Activated T-helper 1 cell treated with anti-CD3 and anti-CD28 coated beads, Interleukin-12 subunit alpha, Interleukin-12 subunit beta, Interleukin-2, Interleukin-4 antibody, amounts not matched to agents 30 ng/mL and 10 ng/mL and 1 ng/mL, durations not matched to agents 14 hours and 24 hours and 36 hours (primary cell): ENCODE measurements at regions of chr3 and their contacts with region 1.

Region 1: DNA sequence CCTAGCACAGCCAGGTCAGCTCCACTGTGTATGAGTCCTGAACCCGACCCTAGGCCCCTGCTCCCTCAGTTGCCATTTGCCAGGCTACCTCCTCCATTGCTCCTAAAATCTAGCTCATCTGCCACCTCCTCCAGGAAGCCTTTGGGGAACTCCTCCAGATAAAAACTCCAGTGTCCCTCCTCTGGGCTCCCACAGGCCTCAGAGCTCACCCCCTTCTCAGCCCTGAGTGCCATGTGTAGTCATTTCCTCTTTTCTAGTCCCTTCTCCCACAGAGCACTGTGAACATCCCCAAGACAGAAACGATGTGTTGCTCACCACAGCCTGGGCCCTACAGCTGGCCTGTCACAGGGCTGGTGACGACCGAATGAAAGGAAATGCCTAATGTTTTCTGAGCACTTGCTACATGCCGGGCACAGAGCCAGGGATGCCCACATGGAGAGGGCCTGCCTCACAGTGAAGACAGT is 61.0 kb downstream of the IQSEC1 start:
- DNase-seq: peak; percentile 43
- H3K4me3 Mint-ChIP-seq: peak overlapping the region; percentile 80
- H3K27ac Mint-ChIP-seq: peak overlapping the region; percentile 99
- H3K4me1 Mint-ChIP-seq: peaks cover 85% of the 10 kb centered on the region
- H3K27me3 Mint-ChIP-seq: no peaks in the 10 kb centered on the region

Region 2: GRCh38 chr3:12471243-12471651 is 541.0 kb before region 1 on chr3:
- intact Hi-C with region 1: no loop called
- DNase-seq: peak; percentile 14
- H3K4me3 Mint-ChIP-seq: no peak overlapping the region
- H3K27ac Mint-ChIP-seq: no peak overlapping the region
- H3K4me1 Mint-ChIP-seq: peaks cover 11% of the 10 kb centered on the region
- H3K27me3 Mint-ChIP-seq: no peaks in the 10 kb centered on the region

Region 3: DNA sequence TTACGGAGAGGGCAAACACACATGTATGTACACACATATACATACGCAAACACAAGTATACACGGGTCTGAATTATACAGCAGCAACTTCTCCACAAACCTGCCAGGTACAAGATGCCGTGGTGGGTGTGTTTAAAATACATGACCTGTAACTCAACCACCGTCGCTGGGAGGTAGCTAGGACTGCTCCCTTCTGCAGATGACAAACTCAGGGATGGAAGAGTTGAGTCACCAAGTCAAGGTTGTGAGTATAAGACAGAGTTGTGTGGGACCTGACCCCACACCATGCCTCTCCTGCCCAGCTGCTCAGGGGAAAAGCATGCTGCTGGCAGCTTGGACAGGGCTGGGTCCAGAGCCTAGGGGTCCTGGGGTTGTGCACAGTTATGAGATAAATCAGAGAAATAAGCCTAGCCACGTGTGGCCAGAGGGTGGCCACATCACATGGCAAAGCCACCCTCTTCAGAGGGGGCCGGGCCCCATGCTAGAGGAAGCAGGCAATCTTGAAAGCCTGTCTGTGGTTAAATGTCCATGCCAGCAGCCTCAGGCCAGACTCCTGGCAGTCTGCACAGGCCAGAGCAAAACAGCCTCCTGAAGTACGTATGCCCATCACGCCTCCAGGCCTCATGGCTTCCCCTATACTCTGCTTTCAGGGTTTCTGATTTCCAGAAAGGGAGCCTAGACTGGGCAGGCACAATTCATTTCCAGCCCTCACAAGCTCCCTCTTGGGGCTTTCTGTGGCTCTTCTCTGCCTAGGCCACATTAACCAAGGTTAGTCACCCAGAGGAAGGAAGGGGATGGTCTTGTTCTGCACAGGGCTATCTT is 63.2 kb before region 1 on chr3:
- intact Hi-C with region 1: loop called (anchors 2 kb)
- DNase-seq: peak; percentile 32
- H3K4me3 Mint-ChIP-seq: peak overlapping the region; percentile 31
- H3K27ac Mint-ChIP-seq: peak overlapping the region; percentile 88
- H3K4me1 Mint-ChIP-seq: peaks cover 40% of the 10 kb centered on the region
- H3K27me3 Mint-ChIP-seq: no peaks in the 10 kb centered on the region

Region 4: DNA sequence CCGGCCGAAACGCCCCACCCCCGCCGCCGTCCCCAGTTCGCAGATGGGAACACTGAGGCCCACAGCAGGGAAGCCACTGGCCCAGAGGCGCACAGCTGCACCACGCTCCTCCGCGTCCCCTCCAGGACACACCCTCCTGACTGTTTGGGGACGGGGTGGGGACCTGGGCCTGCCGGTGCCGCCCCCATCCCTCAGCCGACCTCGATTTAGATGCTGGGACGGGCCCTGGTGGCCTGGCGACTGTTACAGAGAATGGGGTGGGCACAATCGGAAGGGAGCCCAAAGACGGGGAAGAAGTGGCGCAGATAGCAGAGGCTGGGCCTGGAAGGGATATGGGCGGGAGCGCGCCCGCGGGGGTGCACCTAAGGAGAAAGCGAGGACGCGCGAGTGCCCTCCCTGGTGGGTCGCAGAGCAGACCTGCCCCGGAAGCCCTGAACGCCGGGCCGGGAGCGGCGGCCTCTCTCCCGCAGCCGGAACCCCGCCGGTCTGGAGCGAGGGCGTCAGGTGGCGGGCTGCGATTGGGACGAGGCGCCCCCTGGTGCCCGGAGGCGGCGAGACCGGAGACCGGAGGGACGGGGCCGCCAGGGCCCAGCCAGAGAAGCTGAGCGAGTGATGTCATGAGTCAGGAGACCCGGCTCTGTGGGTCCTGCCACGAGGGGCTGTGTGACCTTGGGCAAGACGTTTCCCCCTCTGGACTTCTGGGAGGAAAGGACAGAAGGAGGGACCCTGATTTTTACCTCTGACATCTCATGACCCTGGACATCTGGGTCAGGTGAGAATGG is 17.5 kb before region 1 on chr3:
- intact Hi-C with region 1: loop called (anchors 1 kb)
- DNase-seq: peak; percentile 82
- H3K4me3 Mint-ChIP-seq: peak overlapping the region; percentile 83
- H3K27ac Mint-ChIP-seq: peak overlapping the region; percentile 81
- H3K4me1 Mint-ChIP-seq: peaks cover 30% of the 10 kb centered on the region
- H3K27me3 Mint-ChIP-seq: peaks cover 2% of the 10 kb centered on the region

Region 5: DNA sequence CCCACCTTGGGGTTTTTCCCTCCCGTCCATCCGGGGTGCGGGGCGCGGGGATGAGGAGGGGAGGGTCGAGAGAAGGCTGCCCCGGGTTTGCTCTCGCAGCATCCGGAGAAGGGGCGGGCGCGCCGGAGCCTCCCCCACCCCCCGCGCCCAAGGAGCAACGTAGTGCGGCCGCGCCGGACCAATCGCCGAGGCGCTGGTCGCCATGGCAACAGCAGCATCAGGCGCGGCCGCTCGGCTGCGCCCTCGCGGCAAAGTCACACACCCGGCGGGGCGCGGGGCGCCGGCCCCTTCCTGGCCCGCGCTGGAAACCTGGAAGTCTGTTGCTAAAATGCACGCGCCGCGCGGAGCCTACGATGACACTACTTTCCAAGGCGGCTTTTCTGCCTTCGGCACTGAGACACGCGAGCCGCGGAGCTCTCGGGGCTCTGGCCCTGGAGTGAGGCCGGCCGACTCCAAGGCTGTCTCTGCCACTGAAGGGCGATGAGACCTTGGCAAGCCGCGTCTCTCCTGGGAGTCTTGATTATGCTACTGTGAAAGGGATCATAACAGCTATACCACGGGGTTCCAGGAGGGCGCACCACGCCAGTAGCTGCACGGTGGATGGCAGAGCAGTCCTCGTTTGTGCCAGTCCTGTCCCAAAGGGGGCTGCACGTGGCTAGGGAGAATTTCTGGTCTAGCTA is 61.2 kb after region 1 on chr3 and contains the start of gene IQSEC1:
- intact Hi-C with region 1: loop called (anchors 1 kb)
- DNase-seq: peak; percentile 71
- H3K4me3 Mint-ChIP-seq: peak within 1 kb of the TSS; percentile 84
- H3K27ac Mint-ChIP-seq: peak within 1 kb of the TSS; percentile 68
- H3K4me1 Mint-ChIP-seq: peaks cover 28% of the 10 kb centered on the region
- H3K27me3 Mint-ChIP-seq: peaks cover 33% of the 10 kb centered on the region
- total RNA-seq, gene IQSEC1: 24.9 and 31.4 TPM in 2 replicates

Region 6: DNA sequence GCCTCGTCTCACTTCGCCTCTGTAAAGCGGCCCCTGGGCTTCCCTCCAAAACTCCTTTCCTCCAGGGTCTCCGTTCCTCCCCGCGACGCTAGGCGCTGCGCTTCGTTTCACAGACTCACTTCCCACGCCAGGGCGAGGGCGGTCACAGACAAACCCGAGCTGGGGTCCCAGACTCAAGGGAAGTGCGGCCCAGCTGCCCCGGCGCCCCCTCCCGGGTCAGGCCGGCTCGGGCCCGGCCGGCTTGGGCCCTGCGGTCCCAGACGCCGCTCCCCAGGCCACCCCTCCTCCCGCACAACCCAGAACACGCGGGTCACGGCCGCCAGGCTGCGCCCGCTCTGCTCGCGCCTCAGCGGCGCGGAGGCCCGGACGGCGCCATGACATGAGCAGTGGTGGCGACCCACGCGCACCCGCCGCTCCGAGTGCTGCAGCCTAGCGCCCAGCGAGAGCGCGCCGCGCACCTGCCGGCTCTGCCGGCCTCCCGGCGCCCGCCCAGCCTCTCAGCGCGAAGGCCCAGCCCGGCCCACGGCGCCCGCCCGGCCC is 407.3 kb after region 1 on chr3:
- intact Hi-C with region 1: loop called (anchors 5 kb)
- DNase-seq: peak; percentile 56
- H3K4me3 Mint-ChIP-seq: peak overlapping the region; percentile 88
- H3K27ac Mint-ChIP-seq: peak overlapping the region; percentile 92
- H3K4me1 Mint-ChIP-seq: peaks cover 71% of the 10 kb centered on the region
- H3K27me3 Mint-ChIP-seq: no peaks in the 10 kb centered on the region